MCF 10A (cell line): ENCODE measurements at regions of chr10 and their contacts with region 1.

Region 1: DNA sequence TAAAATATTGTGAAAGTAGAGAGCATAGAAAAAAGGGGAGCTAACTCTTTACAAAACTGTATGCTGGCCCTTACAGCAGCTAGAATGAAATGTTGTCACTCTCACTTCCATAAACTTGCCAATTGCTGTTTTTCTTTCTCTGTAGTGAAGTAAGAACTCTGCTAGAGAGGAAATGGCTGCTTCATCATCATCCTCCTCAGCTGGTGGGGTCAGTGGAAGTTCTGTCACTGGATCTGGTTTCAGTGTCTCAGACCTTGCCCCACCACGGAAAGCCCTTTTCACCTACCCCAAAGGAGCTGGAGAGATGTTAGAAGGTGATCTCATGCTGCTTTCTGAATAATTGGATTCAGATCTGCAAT is 7.6 kb upstream of the ASCC1 start:
- DNase-seq: no peak
- H3K4me3 Mint-ChIP-seq: no peak overlapping the region
- H3K27ac Mint-ChIP-seq: peak overlapping the region; percentile 23
- H3K4me1 Mint-ChIP-seq: peaks cover 12% of the 10 kb centered on the region
- H3K27me3 Mint-ChIP-seq: no peaks in the 10 kb centered on the region
- CTCF ChIP-seq: no peak

Region 2: GRCh38 chr10:71582019-71582418 is 641.7 kb before region 1 on chr10:
- CTCF ChIA-PET with region 1: no interaction called
- POLR2A ChIA-PET with region 1: no interaction called
- intact Hi-C with region 1: no loop called
- DNase-seq: peak; percentile 30
- H3K4me3 Mint-ChIP-seq: no peak overlapping the region
- H3K27ac Mint-ChIP-seq: no peak overlapping the region
- H3K4me1 Mint-ChIP-seq: no peaks in the 10 kb centered on the region
- H3K27me3 Mint-ChIP-seq: peaks cover 29% of the 10 kb centered on the region
- CTCF ChIP-seq: no peak

Region 3: DNA sequence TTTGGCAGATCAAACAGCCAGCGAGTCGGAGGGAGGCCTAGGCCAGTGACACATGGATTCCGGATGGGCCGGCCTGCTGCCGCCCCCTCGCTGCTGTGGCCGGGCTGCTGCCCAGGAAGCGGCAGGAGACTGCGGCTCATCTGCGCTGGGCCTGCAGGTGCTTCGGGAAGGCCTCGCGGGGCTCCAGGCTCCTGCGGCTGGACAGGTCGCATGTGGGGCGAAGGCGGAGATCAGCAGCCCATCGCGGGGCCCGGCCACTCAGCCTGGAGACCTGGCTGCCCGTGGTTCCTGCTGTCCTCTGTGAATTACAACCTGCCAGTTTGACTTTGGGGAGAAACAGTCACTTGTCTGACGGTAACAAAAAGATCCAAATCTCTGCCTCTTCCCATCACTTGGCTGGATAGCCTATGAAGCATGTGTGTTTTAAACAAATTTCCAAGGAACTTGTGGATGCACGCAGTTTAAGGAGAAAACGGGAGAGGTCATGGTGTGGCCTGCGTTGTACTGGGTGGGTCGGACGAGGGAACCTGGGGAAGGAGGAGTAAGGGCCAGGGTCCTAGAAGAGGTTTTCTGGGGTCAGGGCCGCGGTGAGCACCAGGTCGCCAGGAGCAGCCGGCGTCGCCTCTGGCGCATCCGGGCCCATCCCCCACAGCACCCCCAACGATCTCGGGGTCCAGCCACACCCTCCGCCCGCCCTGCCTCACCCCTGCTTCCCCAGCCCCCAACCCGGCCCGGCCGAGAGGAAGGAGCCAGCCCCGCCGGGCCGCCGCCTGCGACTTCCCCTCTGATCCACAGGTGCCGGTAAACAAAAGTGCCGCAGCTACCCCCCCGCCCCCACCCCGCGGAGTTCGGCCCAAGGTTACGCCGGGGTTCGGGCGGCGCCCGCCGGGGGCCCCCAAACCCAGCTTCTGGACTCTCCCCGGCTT is 137.0 kb before region 1 on chr10:
- CTCF ChIA-PET with region 1: no interaction called
- POLR2A ChIA-PET with region 1: no interaction called
- intact Hi-C with region 1: no loop called
- DNase-seq: no peak
- H3K4me3 Mint-ChIP-seq: no peak overlapping the region
- H3K27ac Mint-ChIP-seq: no peak overlapping the region
- H3K4me1 Mint-ChIP-seq: no peaks in the 10 kb centered on the region
- H3K27me3 Mint-ChIP-seq: no peaks in the 10 kb centered on the region
- CTCF ChIP-seq: no peak

Region 4: DNA sequence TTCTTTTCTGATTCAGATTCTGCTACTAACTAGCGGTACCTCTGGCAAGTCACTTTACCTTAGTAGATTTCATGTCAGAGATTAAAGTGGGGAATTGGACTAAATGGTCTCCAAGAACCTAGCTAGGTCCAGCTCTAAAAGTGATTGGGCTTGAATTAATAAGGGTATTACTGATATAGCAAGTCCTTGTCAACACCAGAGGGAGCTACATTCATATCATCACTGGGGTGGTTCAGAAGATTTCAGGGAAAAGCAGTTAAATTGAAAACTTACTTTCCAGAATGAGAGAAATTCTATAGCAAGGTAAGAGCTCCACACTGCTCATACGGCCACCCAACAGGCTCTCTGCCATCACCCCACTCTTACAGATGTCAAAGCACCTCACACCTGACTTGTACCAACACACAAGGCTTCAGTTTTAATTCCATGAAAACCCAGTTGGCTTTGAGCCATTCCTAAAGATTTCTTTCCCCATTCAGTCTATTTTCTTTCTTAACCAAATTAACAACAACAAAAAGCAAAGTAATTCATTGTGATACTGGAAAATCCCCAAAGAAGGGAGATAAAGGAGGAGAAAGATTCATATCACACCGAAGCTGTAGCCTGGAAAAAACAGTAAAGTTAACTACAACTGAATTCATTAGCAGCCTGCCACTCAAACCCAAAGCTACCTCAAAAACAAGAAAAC is 97.4 kb before region 1 on chr10:
- CTCF ChIA-PET with region 1: interaction called, 42 read pairs
- POLR2A ChIA-PET with region 1: interaction called, 7 read pairs
- intact Hi-C with region 1: loop called (anchors 1 kb)
- DNase-seq: peak; percentile 59
- H3K4me3 Mint-ChIP-seq: no peak overlapping the region
- H3K27ac Mint-ChIP-seq: no peak overlapping the region
- H3K4me1 Mint-ChIP-seq: no peaks in the 10 kb centered on the region
- H3K27me3 Mint-ChIP-seq: no peaks in the 10 kb centered on the region
- CTCF ChIP-seq: peak; percentile 31

Region 5: DNA sequence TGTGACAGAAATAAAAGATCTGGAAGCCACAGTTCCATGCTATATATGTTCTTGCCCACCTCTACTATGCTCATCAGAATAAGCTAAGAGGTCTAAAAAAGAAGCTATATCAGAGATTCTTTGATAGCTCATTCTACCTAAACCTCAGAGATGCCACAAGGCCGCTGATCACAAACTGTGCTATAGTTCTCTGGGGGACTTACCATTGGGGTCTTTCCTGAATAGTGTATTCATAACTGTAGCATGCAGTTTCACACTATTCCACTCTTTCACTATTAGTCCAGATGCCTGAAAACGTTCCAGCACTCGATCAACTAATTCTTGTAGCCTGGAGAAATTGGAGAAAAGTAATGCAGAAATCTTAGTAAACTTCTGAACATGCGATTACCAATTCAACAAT is 90.9 kb before region 1 on chr10:
- CTCF ChIA-PET with region 1: interaction called, 42 read pairs
- POLR2A ChIA-PET with region 1: interaction called, 3 read pairs
- intact Hi-C with region 1: no loop called
- DNase-seq: no peak
- H3K4me3 Mint-ChIP-seq: no peak overlapping the region
- H3K27ac Mint-ChIP-seq: no peak overlapping the region
- H3K4me1 Mint-ChIP-seq: peaks cover 16% of the 10 kb centered on the region
- H3K27me3 Mint-ChIP-seq: no peaks in the 10 kb centered on the region
- CTCF ChIP-seq: no peak

Region 6: GRCh38 chr10:72260588-72261322 is 37.0 kb after region 1 on chr10:
- CTCF ChIA-PET with region 1: interaction called, 3 read pairs
- POLR2A ChIA-PET with region 1: interaction called, 23 read pairs
- intact Hi-C with region 1: no loop called
- DNase-seq: peak; percentile 99
- H3K4me3 Mint-ChIP-seq: peak overlapping the region; percentile 53
- H3K27ac Mint-ChIP-seq: peak overlapping the region; percentile 87
- H3K4me1 Mint-ChIP-seq: peaks cover 46% of the 10 kb centered on the region
- H3K27me3 Mint-ChIP-seq: no peaks in the 10 kb centered on the region
- CTCF ChIP-seq: no peak